K562 (cell line): ENCODE measurements at regions of chr11 and their contacts with region 1.

Region 1: GRCh38 chr11:134139873-134140331 is 71.0 kb downstream of the JAM3 start:
- DNase-seq: peak; percentile 35 to 62 (median 44)
- ATAC-seq: peak; percentile 97
- H3K4me3 ChIP-seq: no peak overlapping the region
- H3K27ac ChIP-seq: no peak overlapping the region
- H3K4me1 ChIP-seq: no peaks in the 10 kb centered on the region
- H3K27me3 ChIP-seq: peaks cover 0 to 15% of the 10 kb centered on the region in 2 experiments; a peak in 3 of 5 replicates
- CTCF ChIP-seq: peak; percentile 60 to 77 (median 72)
- EP300 ChIP-seq: no peak
- POLR2A ChIP-seq: no peak
- RAD21 ChIP-seq: peak; percentile 63 to 70

Region 2: DNA sequence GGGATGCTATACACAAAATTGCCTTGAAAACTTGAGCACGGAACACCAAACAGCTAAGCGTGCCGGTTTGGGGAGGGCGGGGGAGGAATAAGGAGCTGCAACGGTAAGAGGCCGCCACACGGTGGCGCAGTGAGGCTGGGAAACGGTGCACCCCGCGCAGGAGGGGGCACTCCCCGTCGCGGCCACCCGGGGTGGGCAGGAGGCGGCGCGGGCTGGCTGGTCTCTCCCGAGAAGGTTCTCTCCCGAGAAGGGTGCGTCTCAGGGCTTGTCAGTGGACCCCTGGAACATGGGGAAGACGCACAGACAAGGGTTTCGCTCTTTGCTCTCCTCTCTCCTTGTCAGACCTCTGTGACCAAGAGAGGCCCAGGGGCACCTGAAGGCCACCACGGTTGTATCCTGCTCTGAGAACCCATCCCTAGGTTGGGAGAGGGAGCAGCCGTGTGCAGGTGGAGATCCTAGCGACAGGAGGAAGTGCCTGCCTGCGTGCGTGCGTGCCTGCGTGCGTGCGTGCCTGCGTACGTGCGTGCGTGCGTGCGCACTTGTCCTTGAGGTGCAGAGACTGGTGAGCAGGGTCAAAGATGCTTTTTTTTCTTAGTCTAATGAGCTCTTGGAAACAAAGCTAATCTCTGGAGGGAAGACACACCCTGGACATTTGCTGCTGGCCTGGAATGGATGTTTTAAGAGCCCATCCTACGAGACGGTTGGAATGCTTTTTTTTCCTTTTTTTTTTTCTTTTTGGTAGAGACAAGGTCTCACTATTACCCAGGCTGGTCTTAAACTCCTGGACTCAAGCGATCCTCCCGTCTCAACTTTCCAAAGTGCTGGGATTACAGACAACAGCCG is 89.1 kb before region 1 on chr11:
- CTCF ChIA-PET with region 1: no interaction called
- POLR2A ChIA-PET with region 1: no interaction called
- in situ Hi-C with region 1: loop called (anchors 5 kb)
- intact Hi-C with region 1: loop called (anchors 1 kb)
- DNase-seq: peak; percentile 76 to 91 (median 90)
- ATAC-seq: peak; percentile 98
- H3K4me3 ChIP-seq: no peak overlapping the region
- H3K27ac ChIP-seq: no peak overlapping the region
- H3K4me1 ChIP-seq: peaks cover 0 to 10% of the 10 kb centered on the region in 2 experiments; a peak in 3 of 5 replicates
- H3K27me3 ChIP-seq: peaks cover 6 to 49% of the 10 kb centered on the region in 2 experiments
- CTCF ChIP-seq: peak; percentile 86 to 94 (median 89)
- EP300 ChIP-seq: no peak
- POLR2A ChIP-seq: no peak
- RAD21 ChIP-seq: peak; percentile 55 to 82